ENCODE measurements at regions of chr6 and their contacts with region 1.

Region 1: GRCh38 chr6:129251669-129252376 is 368.9 kb downstream of the LAMA2 start:
- H3K4me3 ChIP-seq: no peak overlapping the region
- H3K27ac ChIP-seq: no peak overlapping the region
- H3K4me1 ChIP-seq: no peaks in the 10 kb centered on the region
- CTCF ChIP-seq: peak; percentile 68

Region 2: DNA sequence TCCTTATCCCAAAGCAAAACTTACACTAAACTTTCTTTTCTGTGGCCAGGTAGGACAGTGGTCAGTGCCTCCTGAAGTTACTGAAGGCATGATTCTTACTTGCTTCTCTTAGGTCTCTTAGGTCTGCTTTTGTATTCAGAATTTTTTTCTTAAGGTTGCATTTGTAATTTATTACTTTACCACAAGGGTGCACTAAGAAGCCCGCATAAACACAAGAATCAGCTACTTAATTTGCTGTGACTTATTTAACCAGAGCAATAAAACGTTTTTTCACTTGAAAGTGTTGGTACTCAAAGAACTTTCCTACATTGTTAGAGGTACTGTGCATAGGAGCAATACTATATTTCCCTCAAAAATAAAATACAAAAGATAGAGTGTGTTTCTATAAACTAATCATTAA is 444.2 kb before region 1 on chr6:
- CTCF ChIA-PET with region 1: interaction called, 32 read pairs
- POLR2A ChIA-PET with region 1: no interaction called
- H3K4me3 ChIP-seq: no peak overlapping the region
- H3K27ac ChIP-seq: no peak overlapping the region
- H3K4me1 ChIP-seq: no peaks in the 10 kb centered on the region
- CTCF ChIP-seq: no peak

Region 3: DNA sequence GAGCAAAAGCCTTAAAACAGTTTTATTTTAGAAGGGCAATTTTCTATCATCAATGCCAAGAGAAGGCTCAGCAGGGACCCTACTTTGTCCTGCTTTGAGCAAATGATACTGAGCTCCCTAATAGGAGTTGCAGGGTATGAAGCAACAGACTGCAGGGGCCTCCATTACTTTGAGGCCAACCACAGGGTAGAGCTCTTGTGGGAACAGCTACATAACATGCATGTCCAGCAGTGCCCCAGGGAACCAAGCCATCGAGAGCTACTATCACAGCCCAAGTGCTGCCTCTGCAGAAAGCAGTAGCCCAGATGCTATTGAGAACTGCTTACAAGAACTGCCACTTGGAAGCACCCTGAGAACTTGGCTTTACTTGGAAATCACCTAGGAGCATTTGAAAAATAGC is 146.8 kb before region 1 on chr6:
- CTCF ChIA-PET with region 1: no interaction called
- POLR2A ChIA-PET with region 1: no interaction called
- H3K4me3 ChIP-seq: no peak overlapping the region
- H3K27ac ChIP-seq: no peak overlapping the region
- H3K4me1 ChIP-seq: no peaks in the 10 kb centered on the region
- CTCF ChIP-seq: no peak

Region 4: GRCh38 chr6:129262661-129263060 is 10.8 kb after region 1 on chr6:
- CTCF ChIA-PET with region 1: interaction called, 29 read pairs
- POLR2A ChIA-PET with region 1: interaction called, 3 read pairs
- H3K4me3 ChIP-seq: no peak overlapping the region
- H3K27ac ChIP-seq: no peak overlapping the region
- H3K4me1 ChIP-seq: no peaks in the 10 kb centered on the region; the same call in 1 of the 2 replicates
- CTCF ChIP-seq: no peak

Region 5: DNA sequence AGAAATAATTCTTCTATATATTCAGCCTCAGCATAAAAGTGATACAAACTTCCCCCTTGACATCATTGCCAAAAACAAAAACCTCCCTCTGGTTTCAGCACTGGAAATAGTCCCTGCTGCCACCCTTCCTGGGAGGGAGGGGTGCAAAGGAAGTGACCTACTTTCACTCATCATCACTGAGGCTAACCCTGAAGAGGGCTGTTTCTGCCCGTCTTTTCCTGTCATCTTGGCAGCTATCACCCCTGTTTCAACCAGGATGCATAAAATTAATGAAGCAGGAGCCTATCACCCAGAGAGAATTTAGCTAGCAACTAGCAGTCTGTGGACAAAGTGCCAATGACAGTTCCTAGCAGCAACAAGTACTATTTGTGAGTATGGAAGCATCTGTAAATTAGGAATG is 28.9 kb after region 1 on chr6:
- CTCF ChIA-PET with region 1: no interaction called
- POLR2A ChIA-PET with region 1: no interaction called
- H3K4me3 ChIP-seq: no peak overlapping the region
- H3K27ac ChIP-seq: no peak overlapping the region
- H3K4me1 ChIP-seq: no peaks in the 10 kb centered on the region
- CTCF ChIP-seq: no peak